Caco-2 (cell line): ENCODE measurements at regions of chr17 and their contacts with region 1.

Region 1: GRCh38 chr17:43155666-43156065 is 15.3 kb upstream of the NBR1 start:
- DNase-seq: peak; percentile 55 to 61
- H3K4me3 ChIP-seq: no peak overlapping the region
- H3K4me3 Mint-ChIP-seq: no peak overlapping the region
- H3K27ac Mint-ChIP-seq: no peak overlapping the region
- H3K4me1 ChIP-seq: peaks cover 18% of the 10 kb centered on the region
- H3K4me1 Mint-ChIP-seq: peaks cover 8% of the 10 kb centered on the region
- H3K27me3 ChIP-seq: no peaks in the 10 kb centered on the region
- H3K27me3 Mint-ChIP-seq: no peaks in the 10 kb centered on the region
- CTCF ChIP-seq: no peak

Region 2: GRCh38 chr17:43373356-43373755 is 217.7 kb after region 1 on chr17:
- CTCF ChIA-PET with region 1: no interaction called
- POLR2A ChIA-PET with region 1: interaction called, 10 read pairs
- intact Hi-C with region 1: no loop called
- DNase-seq: no peak
- H3K4me3 ChIP-seq: no peak overlapping the region
- H3K4me3 Mint-ChIP-seq: no peak overlapping the region
- H3K27ac Mint-ChIP-seq: no peak overlapping the region
- H3K4me1 ChIP-seq: peaks cover 17% of the 10 kb centered on the region
- H3K4me1 Mint-ChIP-seq: peaks cover 24% of the 10 kb centered on the region
- H3K27me3 ChIP-seq: no peaks in the 10 kb centered on the region
- H3K27me3 Mint-ChIP-seq: no peaks in the 10 kb centered on the region
- CTCF ChIP-seq: no peak